ENCODE measurements at regions of chr11 and their contacts with region 1.

Region 1: GRCh38 chr11:31397239-31397834 is 27.7 kb downstream of the DNAJC24 start:
- DNase-seq: no peak
- H3K4me3 Mint-ChIP-seq: no peak overlapping the region
- H3K27ac Mint-ChIP-seq: no peak overlapping the region
- H3K4me1 Mint-ChIP-seq: no peaks in the 10 kb centered on the region
- H3K27me3 Mint-ChIP-seq: no peaks in the 10 kb centered on the region

Region 2: GRCh38 chr11:31445621-31446020 is 48.3 kb after region 1 on chr11:
- intact Hi-C with region 1: no loop called
- DNase-seq: no peak
- H3K4me3 Mint-ChIP-seq: no peak overlapping the region
- H3K27ac Mint-ChIP-seq: no peak overlapping the region
- H3K4me1 Mint-ChIP-seq: no peaks in the 10 kb centered on the region
- H3K27me3 Mint-ChIP-seq: no peaks in the 10 kb centered on the region

Region 3: GRCh38 chr11:31558001-31558400 is 160.7 kb after region 1 on chr11:
- intact Hi-C with region 1: no loop called
- DNase-seq: no peak
- H3K4me3 Mint-ChIP-seq: no peak overlapping the region
- H3K27ac Mint-ChIP-seq: no peak overlapping the region
- H3K4me1 Mint-ChIP-seq: no peaks in the 10 kb centered on the region
- H3K27me3 Mint-ChIP-seq: no peaks in the 10 kb centered on the region

Region 4: DNA sequence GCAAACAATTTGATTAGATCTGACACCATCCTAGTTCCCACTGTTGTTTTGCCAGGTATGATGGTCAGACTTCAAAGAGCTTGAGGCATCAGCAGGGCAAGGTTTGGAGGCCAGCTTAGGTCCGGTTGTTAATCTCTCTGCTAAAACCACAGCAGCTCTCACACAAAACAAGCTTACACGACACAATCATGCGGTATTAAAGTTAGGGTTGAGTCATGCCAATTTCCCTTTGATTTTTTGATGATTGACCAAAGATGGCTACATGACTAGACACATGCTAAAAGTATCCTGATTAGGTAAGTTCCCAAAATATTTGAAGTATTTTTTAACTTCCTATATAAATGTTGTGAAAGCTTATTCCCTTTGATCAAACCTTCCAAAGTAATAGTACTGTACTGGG is 258.1 kb after region 1 on chr11:
- intact Hi-C with region 1: loop called (anchors 10 kb)
- DNase-seq: no peak
- H3K4me3 Mint-ChIP-seq: no peak overlapping the region
- H3K27ac Mint-ChIP-seq: no peak overlapping the region
- H3K4me1 Mint-ChIP-seq: peaks cover 5% of the 10 kb centered on the region
- H3K27me3 Mint-ChIP-seq: no peaks in the 10 kb centered on the region

Region 5: DNA sequence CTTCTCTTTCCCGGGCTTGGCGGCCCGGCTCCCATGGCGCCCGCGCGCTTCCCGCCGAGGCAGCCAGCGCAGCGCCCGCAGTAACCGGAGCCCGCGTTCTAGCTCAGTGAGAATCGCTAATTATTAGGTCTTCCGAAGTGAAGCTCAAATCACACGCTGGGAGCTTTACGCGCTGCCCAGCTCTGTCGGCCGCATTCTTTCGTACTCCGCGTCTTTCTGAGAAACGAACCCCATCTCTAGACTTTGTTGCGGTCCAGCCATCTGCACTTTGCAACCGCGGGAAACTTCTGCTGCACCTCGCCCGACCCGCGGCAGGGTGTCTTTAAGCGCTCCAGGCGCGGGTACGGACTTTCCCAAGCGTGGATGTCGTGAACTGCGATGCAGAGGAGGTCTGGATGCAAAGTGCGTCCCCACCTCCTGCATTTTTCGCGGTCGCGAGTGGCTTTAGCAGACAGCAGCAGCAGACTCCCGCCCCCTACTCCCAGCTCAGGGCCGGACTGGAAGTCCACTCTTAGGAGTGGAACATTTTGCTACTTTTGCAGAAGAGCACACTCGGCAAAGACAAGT is 419.8 kb after region 1 on chr11:
- intact Hi-C with region 1: loop called (anchors 5 kb)
- DNase-seq: no peak
- H3K4me3 Mint-ChIP-seq: no peak overlapping the region
- H3K27ac Mint-ChIP-seq: peak overlapping the region; percentile 70
- H3K4me1 Mint-ChIP-seq: peaks cover 13% of the 10 kb centered on the region
- H3K27me3 Mint-ChIP-seq: peaks cover 77% of the 10 kb centered on the region

Region 6: DNA sequence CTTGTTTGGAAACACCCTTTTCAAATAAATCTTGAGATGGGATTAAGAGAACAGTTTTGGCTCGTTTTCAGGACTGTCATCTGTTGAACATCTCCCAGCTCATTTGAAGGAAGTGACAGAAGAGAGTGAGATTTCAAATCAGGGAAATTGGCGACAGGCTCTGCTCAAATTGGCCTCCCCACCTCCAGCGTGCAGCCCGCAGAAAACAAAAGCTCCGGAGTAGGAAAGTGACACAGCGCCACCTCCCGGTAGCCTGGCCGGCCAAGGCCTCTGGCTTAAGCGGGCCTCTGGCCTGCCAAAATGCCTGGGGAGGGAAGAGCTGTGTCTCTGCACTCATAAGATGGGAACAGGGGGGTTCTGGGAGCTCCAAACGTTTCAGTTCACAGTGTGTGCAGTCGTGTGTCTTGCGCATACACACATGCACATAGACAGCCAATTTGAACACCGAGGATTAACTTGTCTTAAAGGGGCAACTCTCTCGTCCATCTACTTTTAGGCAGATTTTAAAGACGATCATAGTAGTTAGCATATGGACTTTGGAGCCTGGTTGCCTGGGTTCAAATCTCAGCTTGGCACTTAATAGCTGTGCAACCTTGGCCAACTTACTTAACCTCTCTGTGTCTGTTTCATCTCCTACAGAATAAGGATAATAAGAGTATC is 560.9 kb after region 1 on chr11:
- intact Hi-C with region 1: loop called (anchors 1 kb)
- DNase-seq: peak; percentile 63
- H3K4me3 Mint-ChIP-seq: no peak overlapping the region
- H3K27ac Mint-ChIP-seq: no peak overlapping the region
- H3K4me1 Mint-ChIP-seq: peaks cover 5% of the 10 kb centered on the region
- H3K27me3 Mint-ChIP-seq: peaks cover 10% of the 10 kb centered on the region

Region 7: DNA sequence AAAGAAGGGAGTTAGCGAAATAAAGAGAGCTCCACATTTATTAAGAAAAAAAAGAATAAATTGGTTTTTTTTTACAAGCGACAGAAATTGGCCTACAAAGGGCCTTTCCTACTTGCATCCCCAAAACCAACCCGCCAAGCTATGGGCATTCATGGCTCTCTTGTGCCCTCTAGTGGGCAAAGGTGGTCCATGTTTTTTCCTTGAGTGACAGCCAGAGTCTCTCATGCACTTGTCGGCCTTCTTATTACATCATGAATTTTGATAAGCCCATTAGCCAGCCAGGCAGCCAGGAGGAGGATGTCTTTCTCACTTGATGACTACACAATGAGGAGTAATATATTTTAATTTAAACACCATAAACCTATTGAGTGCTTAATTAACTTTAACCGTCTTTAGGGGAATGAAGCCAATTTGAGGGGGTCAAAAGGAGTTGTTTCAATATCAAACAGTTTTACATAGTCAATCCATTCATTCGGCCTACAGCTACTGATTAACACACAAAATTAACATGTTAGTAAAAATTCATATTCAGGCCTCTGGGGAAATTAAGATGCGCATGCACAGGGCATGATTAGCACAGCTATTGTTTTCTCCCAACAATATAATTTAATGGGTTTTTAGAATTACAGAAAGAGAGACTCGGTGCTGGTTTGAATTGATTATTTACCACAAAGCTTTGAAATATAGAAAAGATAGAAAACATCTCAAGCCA is 779.0 kb after region 1 on chr11:
- intact Hi-C with region 1: loop called (anchors 1 kb)
- DNase-seq: peak; percentile 70
- H3K4me3 Mint-ChIP-seq: no peak overlapping the region
- H3K27ac Mint-ChIP-seq: no peak overlapping the region
- H3K4me1 Mint-ChIP-seq: peaks cover 4% of the 10 kb centered on the region
- H3K27me3 Mint-ChIP-seq: peaks cover 2% of the 10 kb centered on the region